Caco-2 (cell line): ENCODE measurements at regions of chr4 and their contacts with region 1.

Region 1: DNA sequence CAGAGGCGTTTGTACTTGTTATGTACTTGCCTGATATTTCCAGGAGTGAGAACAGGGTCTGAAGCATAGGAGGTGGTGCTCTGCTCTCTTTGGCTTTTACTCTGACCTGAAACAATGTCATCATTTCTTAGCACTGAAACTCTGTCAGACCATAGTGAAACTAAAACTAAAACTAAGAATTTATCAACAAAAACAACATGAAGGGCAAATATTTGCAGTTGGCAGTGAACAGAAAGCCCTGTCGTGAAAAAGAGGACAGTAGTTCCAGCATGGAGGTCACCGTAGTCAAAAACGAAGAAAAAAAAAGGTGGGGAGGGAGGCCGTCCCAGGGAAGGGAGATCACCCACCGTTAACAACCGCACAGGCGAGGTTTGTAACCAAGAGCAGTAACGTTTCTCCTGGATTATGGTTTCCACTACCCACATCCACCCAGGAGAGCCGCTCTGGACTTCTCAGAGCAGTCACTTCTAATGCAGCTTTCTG is 97.5 kb downstream of the ANK2 start:
- DNase-seq: peak; percentile 33 to 42
- H3K4me3 ChIP-seq: peak overlapping the region; percentile 32
- H3K4me3 Mint-ChIP-seq: peak overlapping the region; percentile 83
- H3K27ac Mint-ChIP-seq: peak overlapping the region; percentile 93
- H3K4me1 ChIP-seq: peaks cover 58% of the 10 kb centered on the region
- H3K4me1 Mint-ChIP-seq: peaks cover 29% of the 10 kb centered on the region
- H3K27me3 ChIP-seq: no peaks in the 10 kb centered on the region
- H3K27me3 Mint-ChIP-seq: no peaks in the 10 kb centered on the region
- CTCF ChIP-seq: no peak

Region 2: DNA sequence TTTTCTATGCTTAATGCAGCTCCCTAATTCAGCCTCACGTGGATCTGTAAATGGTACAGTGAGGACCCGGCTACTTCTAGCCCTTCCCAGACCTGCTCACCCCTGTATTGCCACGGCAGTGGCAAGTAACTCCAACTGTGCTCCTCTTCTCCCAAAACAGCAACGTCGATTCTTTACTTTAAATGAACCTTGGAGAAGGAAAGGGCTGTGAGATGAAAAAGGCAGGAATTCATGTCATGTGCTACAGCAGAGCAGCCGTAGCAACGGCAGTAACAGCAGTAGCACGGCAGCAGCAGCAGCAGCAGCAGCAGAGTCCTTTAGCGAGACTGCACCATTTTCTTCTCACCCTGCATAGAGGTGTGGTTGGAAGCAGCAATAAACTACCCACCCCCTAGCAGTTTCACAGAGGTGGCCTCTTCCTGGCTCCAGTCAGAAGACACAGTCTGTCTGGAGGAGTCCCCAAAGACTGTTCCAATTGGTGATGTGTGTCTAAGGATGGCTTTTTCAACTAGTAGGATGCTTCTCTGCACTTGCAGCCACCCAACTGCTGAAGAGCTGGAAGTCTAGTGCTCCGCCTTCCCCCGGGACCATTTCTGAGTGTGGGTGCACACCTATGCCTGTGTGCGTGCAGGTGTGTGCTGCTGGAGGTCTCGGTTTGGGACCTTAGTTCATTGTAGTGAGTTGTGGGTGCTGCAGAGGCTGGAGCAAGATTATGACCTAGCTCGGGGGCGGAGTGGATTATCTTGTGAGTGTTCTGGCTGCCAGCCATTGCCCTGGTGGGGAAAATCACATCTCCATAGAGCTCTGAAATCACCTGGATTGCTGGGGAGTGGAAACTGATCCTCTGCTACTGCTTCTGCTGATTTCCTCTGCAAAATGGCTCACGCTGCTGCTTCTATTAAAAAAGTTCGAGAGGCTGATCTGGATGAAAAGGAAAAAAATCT is 30.2 kb before region 1 on chr4:
- CTCF ChIA-PET with region 1: no interaction called
- POLR2A ChIA-PET with region 1: no interaction called
- intact Hi-C with region 1: loop called (anchors 2 kb)
- DNase-seq: peak; percentile 55 to 63
- H3K4me3 ChIP-seq: peak overlapping the region; percentile 42
- H3K4me3 Mint-ChIP-seq: peak overlapping the region; percentile 83
- H3K27ac Mint-ChIP-seq: peak overlapping the region; percentile 3
- H3K4me1 ChIP-seq: 0 out of 2 replicates have a peak, but pooled peaks cover 5% of the 10 kb centered on the region
- H3K4me1 Mint-ChIP-seq: peaks cover 6% of the 10 kb centered on the region
- H3K27me3 ChIP-seq: no peaks in the 10 kb centered on the region
- H3K27me3 Mint-ChIP-seq: no peaks in the 10 kb centered on the region
- CTCF ChIP-seq: no peak

Region 3: GRCh38 chr4:113170805-113171468 is 24.0 kb after region 1 on chr4:
- CTCF ChIA-PET with region 1: no interaction called
- POLR2A ChIA-PET with region 1: no interaction called
- intact Hi-C with region 1: loop called (anchors 1 kb)
- DNase-seq: peak; percentile 38 to 54
- H3K4me3 ChIP-seq: no peak overlapping the region
- H3K4me3 Mint-ChIP-seq: peak overlapping the region; percentile 38
- H3K27ac Mint-ChIP-seq: peak overlapping the region; percentile 56
- H3K4me1 ChIP-seq: peaks cover 42% of the 10 kb centered on the region
- H3K4me1 Mint-ChIP-seq: peaks cover 39% of the 10 kb centered on the region
- H3K27me3 ChIP-seq: no peaks in the 10 kb centered on the region
- H3K27me3 Mint-ChIP-seq: no peaks in the 10 kb centered on the region
- CTCF ChIP-seq: no peak

Region 4: GRCh38 chr4:113222471-113222870 is 75.6 kb after region 1 on chr4:
- CTCF ChIA-PET with region 1: no interaction called
- POLR2A ChIA-PET with region 1: no interaction called
- intact Hi-C with region 1: loop called (anchors 2 kb)
- DNase-seq: no peak
- H3K4me3 ChIP-seq: no peak overlapping the region
- H3K4me3 Mint-ChIP-seq: no peak overlapping the region
- H3K27ac Mint-ChIP-seq: no peak overlapping the region
- H3K4me1 ChIP-seq: no peaks in the 10 kb centered on the region
- H3K4me1 Mint-ChIP-seq: peaks cover 6% of the 10 kb centered on the region
- H3K27me3 ChIP-seq: no peaks in the 10 kb centered on the region
- H3K27me3 Mint-ChIP-seq: no peaks in the 10 kb centered on the region
- CTCF ChIP-seq: no peak